AG04449 (cell line): ENCODE measurements at regions of chr17 and their contacts with region 1.

Region 1: DNA sequence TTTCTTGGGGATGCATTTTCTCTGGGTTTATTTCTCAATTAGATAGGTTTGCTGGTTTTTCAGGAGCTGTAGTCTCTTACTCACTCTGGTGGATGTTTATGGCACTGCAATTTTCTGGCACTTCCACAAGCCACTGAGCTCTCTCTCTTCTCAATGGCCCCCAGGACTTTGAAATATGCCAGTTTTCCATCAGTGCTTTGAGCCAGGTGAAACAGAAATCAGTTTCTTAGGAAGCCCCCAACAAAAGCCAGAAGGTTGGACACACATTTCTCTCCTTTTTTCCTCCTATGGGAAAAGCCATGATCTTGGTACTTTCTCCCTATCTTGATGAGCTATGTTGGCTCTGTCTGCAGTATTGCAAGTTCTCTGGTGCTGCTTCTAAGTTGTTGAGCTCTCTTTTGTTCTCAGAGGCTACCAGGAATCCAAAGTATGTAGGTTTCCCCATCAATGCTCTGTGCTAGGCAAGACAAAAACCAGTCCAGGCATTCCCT is 90.7 kb upstream of the SMIM36 start:
- DNase-seq: no peak
- H3K4me3 ChIP-seq: no peak overlapping the region
- CTCF ChIP-seq: peak; percentile 69

Region 2: GRCh38 chr17:55383771-55384642 is 217.9 kb before region 1 on chr17:
- CTCF ChIA-PET with region 1: no interaction called
- POLR2A ChIA-PET with region 1: no interaction called
- DNase-seq: no peak
- H3K4me3 ChIP-seq: no peak overlapping the region
- CTCF ChIP-seq: no peak

Region 3: DNA sequence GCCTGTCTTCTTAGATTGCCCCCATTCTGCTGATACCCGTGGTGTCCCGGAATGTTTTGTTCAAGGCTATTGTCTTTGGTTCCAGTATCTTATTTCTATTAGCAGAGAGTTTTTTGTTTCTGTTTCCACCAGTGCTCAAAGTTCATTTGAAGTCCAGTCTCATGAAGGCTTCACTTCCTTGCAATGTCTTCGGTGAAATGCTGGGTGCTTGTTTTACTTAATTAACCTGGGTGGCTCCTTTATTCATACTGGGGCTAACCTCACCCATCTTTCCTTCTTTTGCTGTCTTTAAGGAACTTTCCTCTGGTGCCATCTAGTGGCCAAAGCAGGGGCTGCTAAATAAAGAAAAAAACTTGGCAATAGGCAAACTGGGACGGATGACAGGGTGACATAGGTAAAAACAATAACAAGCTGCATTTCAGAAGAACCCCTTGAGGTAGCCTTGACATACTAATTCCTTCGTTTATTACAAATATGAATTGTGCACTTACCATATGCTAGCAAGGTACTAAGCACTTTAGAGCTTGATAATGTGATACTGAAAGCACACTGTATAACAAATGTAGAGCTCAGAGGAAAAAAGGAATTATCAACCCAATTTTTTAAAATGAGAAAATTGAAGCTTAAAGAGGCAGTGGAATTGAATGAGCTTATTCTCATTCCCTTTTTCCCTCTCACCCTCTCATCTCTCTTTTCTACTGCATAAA is 87.9 kb before region 1 on chr17:
- CTCF ChIA-PET with region 1: interaction called, 42 read pairs
- POLR2A ChIA-PET with region 1: no interaction called
- DNase-seq: no peak
- H3K4me3 ChIP-seq: no peak overlapping the region
- CTCF ChIP-seq: peak; percentile 63

Region 4: GRCh38 chr17:55533608-55534007 is 68.3 kb before region 1 on chr17:
- CTCF ChIA-PET with region 1: interaction called, 538 read pairs
- POLR2A ChIA-PET with region 1: no interaction called
- DNase-seq: no peak
- H3K4me3 ChIP-seq: no peak overlapping the region
- CTCF ChIP-seq: no peak

Region 5: DNA sequence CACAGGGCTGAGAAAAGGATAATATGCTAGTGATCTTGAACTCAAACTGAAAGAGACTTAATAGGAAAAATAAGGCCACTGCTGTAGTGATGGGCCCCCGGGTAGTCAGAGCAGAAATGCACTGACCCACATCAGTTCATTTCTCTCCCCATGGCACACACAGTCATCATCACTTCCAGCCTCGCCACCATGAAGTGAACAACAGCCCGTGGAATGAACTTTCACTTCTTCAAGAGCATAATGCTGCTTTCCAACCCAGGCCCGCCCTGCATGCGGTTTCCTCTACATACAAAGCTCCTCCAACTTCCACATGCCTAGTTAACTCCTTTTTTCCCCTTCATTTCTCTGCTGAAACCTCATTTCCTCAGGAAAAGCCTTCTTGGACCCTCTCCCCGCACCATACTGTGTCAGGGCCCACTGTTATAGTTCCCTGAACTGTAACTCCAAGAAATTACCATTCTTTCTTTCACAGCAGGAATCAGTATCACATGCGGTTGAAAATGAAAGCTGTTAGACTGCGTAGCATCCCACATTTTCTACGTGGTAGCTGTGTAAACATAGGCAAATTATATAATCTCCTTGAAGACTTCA is 24.8 kb before region 1 on chr17:
- CTCF ChIA-PET with region 1: interaction called, 17 read pairs
- POLR2A ChIA-PET with region 1: no interaction called
- DNase-seq: no peak
- H3K4me3 ChIP-seq: peak overlapping the region; percentile 50
- CTCF ChIP-seq: no peak

Region 6: GRCh38 chr17:55612691-55613141 is 10.8 kb after region 1 on chr17:
- CTCF ChIA-PET with region 1: interaction called, 33 read pairs
- POLR2A ChIA-PET with region 1: no interaction called
- DNase-seq: no peak
- H3K4me3 ChIP-seq: no peak overlapping the region
- CTCF ChIP-seq: no peak

Region 7: DNA sequence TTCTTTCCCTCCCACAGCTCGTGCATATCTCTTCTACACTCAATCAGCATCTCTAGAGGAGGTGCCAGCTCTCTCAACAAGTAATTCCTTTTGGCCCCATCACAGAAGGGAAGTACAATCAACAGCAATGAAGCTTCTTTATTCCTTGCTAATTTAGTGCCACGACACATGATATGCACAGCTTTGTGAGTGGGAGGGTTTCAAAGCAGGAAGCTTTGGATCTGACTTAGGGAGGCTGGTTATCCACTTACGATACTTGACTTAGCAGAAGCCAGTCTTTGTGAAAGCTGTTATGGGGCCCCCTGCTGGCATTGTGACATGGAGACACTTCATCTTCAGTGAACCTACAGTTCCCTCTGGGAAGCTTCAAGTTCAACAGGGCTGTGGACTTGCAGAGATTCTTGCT is 39.8 kb after region 1 on chr17:
- CTCF ChIA-PET with region 1: interaction called, 24 read pairs
- POLR2A ChIA-PET with region 1: no interaction called
- DNase-seq: peak; percentile 12
- H3K4me3 ChIP-seq: no peak overlapping the region
- CTCF ChIP-seq: peak; percentile 62

Region 8: GRCh38 chr17:55693254-55694216 is 91.6 kb after region 1 on chr17:
- CTCF ChIA-PET with region 1: no interaction called
- POLR2A ChIA-PET with region 1: no interaction called
- DNase-seq: no peak
- H3K4me3 ChIP-seq: no peak overlapping the region
- CTCF ChIP-seq: no peak

Region 9: GRCh38 chr17:55717898-55718735 is 116.2 kb after region 1 on chr17:
- CTCF ChIA-PET with region 1: interaction called, 22 read pairs
- POLR2A ChIA-PET with region 1: no interaction called
- DNase-seq: no peak
- H3K4me3 ChIP-seq: no peak overlapping the region
- CTCF ChIP-seq: peak; percentile 60

Region 10: GRCh38 chr17:55794725-55795482 is 193.0 kb after region 1 on chr17:
- CTCF ChIA-PET with region 1: no interaction called
- POLR2A ChIA-PET with region 1: no interaction called
- DNase-seq: no peak
- H3K4me3 ChIP-seq: no peak overlapping the region
- CTCF ChIP-seq: no peak